Activated B cell treated with CpG ODN at 0.5 μM for 24 hours (primary cell): ENCODE measurements at regions of chr10 and their contacts with region 1.

Region 1: GRCh38 chr10:119596537-119597404 is at the start of gene TIAL1:
- DNase-seq: peak; percentile 84
- ATAC-seq: peak; percentile 84
- H3K4me3 Mint-ChIP-seq: peak within 1 kb of the TSS; percentile 95
- H3K27ac Mint-ChIP-seq: peak within 1 kb of the TSS; percentile 97
- H3K4me1 Mint-ChIP-seq: peaks cover 54% of the 10 kb centered on the region
- H3K27me3 Mint-ChIP-seq: no peaks in the 10 kb centered on the region
- CTCF ChIP-seq: no peak
- total RNA-seq, gene TIAL1: 142 and 155 TPM in 2 replicates

Region 2: DNA sequence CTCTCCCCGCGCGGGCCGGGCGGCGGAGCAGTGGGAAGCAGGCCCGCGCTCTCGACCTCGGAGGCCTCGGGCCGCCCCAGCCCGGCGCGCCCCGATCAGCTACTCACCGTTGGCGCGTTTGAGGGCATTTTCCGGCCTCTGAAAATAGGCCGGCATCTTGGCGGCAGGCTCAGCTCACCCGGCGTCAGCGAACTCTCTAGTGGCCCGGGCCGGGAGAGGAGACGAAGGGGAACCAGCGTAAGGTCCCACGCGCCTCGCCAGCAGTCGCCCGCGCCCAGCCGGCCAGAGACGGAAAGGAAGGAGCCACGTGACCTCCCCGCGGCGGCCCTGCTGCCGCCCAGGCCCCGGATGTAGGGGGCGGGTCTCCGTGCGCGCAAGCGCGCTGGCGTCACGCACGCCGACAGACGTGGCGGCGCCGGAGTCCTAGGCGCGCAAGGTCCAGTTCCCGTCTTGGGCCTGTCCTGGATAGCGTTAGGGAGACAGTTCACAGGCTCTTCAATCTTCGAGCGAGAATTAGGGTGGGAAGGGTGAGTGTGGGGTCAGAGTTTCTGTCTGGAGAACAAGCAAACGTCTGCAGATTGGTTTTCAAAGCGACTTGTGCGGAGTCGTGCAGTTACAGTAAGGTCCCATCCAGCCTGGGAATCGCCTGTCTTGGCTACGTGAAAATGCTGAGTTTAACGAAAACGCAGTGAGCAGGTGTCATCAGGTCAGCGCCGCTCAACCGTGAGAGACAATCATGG is 516.1 kb before region 1 on chr10 and contains the start of gene EIF3A:
- CTCF ChIA-PET with region 1: no interaction called
- POLR2A ChIA-PET with region 1: interaction called, 3 read pairs
- intact Hi-C with region 1: loop called (anchors 1 kb)
- DNase-seq: peak; percentile 97
- ATAC-seq: peak; percentile 79
- H3K4me3 Mint-ChIP-seq: peak within 1 kb of the TSS; percentile 89
- H3K27ac Mint-ChIP-seq: peak within 1 kb of the TSS; percentile 93
- H3K4me1 Mint-ChIP-seq: peaks cover 49% of the 10 kb centered on the region
- H3K27me3 Mint-ChIP-seq: no peaks in the 10 kb centered on the region
- CTCF ChIP-seq: no peak
- total RNA-seq, gene EIF3A: 109 and 114 TPM in 2 replicates

Region 3: GRCh38 chr10:119207367-119207668 is 389.5 kb before region 1 on chr10 and contains the start of gene GRK5:
- CTCF ChIA-PET with region 1: no interaction called
- POLR2A ChIA-PET with region 1: no interaction called
- intact Hi-C with region 1: loop called (anchors 1 kb)
- DNase-seq: peak; percentile 96
- ATAC-seq: peak; percentile 81
- H3K4me3 Mint-ChIP-seq: peak within 1 kb of the TSS; percentile 93
- H3K27ac Mint-ChIP-seq: peak within 1 kb of the TSS; percentile 95
- H3K4me1 Mint-ChIP-seq: peaks cover 40% of the 10 kb centered on the region
- H3K27me3 Mint-ChIP-seq: no peaks in the 10 kb centered on the region
- CTCF ChIP-seq: no peak
- total RNA-seq, gene GRK5: 19.9 and 21.3 TPM in 2 replicates

Region 4: DNA sequence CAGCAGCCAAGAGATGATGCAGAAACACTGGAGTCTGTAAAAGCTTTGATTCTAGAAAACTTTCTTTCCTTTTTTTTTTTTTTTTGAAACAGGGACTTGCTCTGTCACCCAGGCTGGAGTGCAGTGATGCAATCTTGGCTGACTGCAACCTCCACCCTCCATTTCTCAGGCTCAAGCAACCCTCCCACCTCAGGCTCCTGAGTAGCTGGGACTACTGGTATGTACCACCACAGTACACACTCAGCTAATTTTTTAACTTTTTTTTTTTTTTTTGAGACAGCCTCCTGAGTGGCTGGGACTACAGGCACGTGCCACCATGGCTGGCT is 37.4 kb after region 1 on chr10:
- CTCF ChIA-PET with region 1: no interaction called
- POLR2A ChIA-PET with region 1: no interaction called
- intact Hi-C with region 1: no loop called
- DNase-seq: no peak
- ATAC-seq: no peak
- H3K4me3 Mint-ChIP-seq: no peak overlapping the region
- H3K27ac Mint-ChIP-seq: no peak overlapping the region
- H3K4me1 Mint-ChIP-seq: no peaks in the 10 kb centered on the region
- H3K27me3 Mint-ChIP-seq: no peaks in the 10 kb centered on the region
- CTCF ChIP-seq: no peak

Region 5: GRCh38 chr10:119650692-119651513 is 54.1 kb after region 1 on chr10 and contains the start of gene BAG3:
- CTCF ChIA-PET with region 1: no interaction called
- POLR2A ChIA-PET with region 1: interaction called, 8 read pairs
- intact Hi-C with region 1: loop called (anchors 1 kb)
- DNase-seq: peak; percentile 73
- ATAC-seq: peak; percentile 93
- H3K4me3 Mint-ChIP-seq: peak within 1 kb of the TSS; percentile 97
- H3K27ac Mint-ChIP-seq: peak within 1 kb of the TSS; percentile 95
- H3K4me1 Mint-ChIP-seq: peaks cover 16% of the 10 kb centered on the region
- H3K27me3 Mint-ChIP-seq: no peaks in the 10 kb centered on the region
- CTCF ChIP-seq: no peak
- total RNA-seq, gene BAG3: 4.3 and 4.7 TPM in 2 replicates

Region 6: DNA sequence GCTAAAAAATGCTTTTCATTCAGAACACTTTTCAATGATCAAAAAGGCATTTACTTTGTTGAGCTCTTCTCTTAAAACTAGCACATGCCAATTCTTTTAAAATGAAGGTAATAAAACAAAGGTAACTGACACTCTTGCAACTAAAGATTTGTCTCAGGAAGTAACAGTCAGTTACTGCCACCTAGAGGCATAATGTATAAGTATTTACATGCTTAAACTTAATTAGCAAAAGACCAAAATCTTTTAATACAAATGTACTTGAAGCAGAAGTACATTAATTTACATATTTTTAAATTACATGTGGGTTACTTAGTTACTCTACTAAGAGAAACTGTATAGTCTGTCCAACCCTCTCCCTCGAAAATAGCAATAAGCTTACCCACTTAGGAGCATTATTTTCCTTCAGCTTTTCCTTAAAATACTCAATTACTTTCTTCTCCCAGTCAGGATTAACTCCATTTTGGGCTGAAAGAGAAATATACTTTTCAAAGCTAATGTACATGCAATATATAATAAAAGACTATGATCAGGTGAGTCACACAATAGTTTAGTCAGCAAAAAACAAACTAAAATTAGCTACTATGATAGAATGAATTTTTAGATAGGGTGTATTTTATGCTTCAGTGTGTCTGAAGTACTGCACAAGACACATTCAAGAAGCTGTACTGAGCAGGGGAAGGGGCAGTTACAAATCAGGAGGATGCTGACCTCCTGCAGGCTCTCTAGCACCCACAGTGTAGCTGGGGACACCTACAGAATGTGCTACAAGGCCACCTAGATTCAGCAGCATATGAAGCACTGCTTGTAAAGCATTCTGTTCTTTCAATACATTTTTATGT is 262.9 kb after region 1 on chr10:
- CTCF ChIA-PET with region 1: interaction called, 9 read pairs
- POLR2A ChIA-PET with region 1: interaction called, 3 read pairs
- intact Hi-C with region 1: loop called (anchors 1 kb)
- DNase-seq: no peak
- ATAC-seq: peak; percentile 50
- H3K4me3 Mint-ChIP-seq: no peak overlapping the region
- H3K27ac Mint-ChIP-seq: no peak overlapping the region
- H3K4me1 Mint-ChIP-seq: peaks cover 30% of the 10 kb centered on the region
- H3K27me3 Mint-ChIP-seq: no peaks in the 10 kb centered on the region
- CTCF ChIP-seq: peak; percentile 46